ENCODE measurements at regions of chr1 and their contacts with region 1.

Region 1: DNA sequence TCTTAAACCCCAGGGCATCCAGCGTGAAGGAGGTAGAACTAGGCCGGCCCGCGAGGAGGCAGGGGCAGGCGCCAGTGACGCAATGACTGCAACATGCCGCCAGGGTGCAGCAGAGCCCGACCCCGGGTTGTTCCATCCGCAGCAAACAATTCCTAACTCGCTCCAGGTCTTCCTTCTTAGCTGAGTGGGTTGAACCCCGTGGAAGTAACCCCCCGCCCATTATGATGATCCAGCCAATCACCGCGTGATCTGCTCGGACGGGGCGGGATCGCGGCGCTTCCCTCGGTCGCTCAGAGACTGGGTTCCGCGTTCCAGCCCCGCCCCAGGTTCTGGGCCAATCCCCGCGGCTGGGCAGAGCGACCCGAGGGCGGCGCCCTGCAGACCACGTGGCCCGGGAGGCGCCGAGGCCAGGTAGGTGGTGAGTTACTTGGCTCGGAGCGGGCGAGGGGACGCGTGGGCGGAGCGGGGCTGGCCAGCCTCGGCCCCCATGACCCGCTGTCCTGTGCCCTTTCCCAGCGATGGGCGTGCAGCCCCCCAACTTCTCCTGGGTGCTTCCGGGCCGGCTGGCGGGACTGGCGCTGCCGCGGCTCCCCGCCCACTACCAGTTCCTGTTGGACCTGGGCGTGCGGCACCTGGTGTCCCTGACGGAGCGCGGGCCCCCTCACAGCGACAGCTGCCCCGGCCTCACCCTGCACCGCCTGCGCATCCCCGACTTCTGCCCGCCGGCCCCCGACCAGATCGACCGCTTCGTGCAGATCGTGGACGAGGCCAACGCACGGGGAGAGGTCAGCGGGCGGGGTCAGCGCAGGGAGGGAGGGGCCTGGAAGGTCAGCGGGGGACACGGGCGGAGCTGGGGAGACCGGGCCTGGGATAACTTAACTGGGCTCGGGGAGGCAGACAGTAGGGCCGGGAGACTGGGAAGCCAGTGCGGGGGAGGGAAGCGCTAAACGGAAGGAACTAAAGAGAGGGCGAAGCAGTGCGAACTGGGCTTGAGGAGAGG is at the start of gene DUSP23:
- DNase-seq: peak; percentile 99
- ATAC-seq: peak; percentile 99
- total RNA-seq, gene DUSP23: 15.5 TPM

Region 2: DNA sequence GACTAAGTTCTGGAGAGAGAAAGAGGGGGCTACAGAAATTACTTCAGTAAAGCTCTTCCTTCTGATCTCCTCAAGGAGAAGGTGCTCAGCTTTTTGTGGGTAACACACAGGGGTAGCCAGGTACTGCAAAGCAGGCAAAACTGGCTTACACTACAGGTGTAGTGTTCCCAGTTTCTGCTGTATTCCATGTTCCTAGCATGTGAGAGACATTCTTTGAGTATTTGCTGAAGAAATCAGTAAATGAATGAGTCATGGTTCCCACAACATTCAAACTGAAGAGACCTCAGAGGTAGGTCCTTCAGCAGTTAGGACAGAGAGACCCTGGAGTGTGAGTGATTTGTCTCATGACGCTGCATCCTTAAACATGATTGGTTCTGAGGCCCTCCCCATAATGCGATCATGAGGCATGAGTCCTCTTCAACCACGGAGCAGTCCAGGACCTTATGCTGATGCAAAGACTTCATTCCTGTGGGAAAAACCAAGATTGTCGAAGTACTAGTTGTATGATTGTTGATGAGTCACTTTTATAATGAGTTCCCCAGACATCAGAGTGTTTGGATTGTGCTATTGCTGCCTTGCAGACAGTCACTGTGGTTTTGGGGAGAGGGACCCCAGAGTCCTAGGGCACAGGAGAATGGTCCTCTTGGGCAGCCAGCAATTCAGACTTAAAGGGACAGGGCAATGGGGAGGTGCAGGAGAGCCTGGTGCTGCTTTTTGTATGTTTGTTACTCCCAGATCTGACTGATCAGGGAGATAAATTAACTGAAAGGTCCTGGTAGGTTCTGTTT is 351.6 kb before region 1 on chr1:
- intact Hi-C with region 1: no loop called
- DNase-seq: no peak
- ATAC-seq: no peak

Region 3: DNA sequence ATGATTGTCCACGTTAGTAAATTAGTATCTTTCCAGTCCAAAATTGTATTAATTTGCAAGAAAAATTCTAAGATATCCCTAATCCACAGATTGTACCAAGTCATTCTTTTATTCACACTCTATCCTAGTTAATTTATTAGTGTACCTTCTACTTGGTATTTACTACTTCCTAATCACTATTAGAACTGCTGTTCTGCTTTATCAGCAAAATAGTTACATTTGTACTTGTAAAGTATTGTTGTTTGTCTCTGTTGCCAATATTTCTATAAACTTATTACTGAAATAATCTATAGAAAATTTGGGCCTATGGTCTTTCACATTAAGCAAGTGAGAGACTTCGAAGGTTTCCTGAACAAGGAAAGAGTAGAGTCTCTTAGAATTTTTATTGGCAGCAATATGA is 60.9 kb before region 1 on chr1:
- intact Hi-C with region 1: no loop called
- DNase-seq: no peak
- ATAC-seq: no peak

Region 4: GRCh38 chr1:159891275-159892157 is 110.6 kb after region 1 on chr1:
- intact Hi-C with region 1: loop called (anchors 5 kb)
- DNase-seq: peak; percentile 88
- ATAC-seq: peak; percentile 93